ENCODE measurements at regions of chr14 and their contacts with region 1.

Region 1: DNA sequence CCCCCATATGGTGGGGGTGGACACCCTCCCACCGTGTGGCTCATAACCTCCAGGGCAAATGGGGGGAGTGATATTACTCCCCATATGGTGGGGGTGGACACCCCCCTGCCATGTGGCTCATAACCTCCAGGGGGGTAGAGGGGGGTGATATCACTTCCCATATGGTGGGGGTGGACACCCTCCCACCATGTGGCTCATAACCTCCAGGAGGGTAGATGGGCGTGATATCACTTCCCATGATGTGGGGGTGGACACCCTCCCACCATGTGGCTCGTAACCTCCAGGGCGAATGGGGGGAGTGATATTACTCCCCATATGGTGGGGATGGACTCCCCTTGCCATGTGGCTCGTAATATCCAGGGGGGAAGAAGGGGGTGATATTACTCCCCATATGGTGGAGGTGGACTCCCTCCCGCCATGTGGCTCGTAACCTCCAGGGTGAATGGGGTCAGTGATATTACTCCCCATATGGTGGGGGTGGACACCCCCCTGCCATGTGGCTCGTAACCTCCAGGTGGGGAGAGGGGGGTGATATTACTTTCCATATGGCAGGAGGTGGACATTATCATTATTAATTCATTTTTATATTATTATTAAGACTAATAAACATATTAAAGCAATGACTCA is 51.2 kb upstream of the OXA1L start:
- DNase-seq: no peak
- H3K4me3 Mint-ChIP-seq: no peak overlapping the region
- H3K27ac Mint-ChIP-seq: no peak overlapping the region
- H3K4me1 Mint-ChIP-seq: peaks cover 17% of the 10 kb centered on the region
- H3K27me3 Mint-ChIP-seq: peaks cover 24% of the 10 kb centered on the region

Region 2: GRCh38 chr14:22598099-22598899 is 117.0 kb before region 1 on chr14 and contains the start of gene ABHD4:
- intact Hi-C with region 1: loop called (anchors 5 kb)
- DNase-seq: peak; percentile 72
- H3K4me3 Mint-ChIP-seq: peak within 1 kb of the TSS; percentile 97
- H3K27ac Mint-ChIP-seq: peak within 1 kb of the TSS; percentile 84
- H3K4me1 Mint-ChIP-seq: peaks cover 39% of the 10 kb centered on the region
- H3K27me3 Mint-ChIP-seq: no peaks in the 10 kb centered on the region
- total RNA-seq, gene ABHD4: 13.2 and 13.6 TPM in 2 replicates

Region 3: DNA sequence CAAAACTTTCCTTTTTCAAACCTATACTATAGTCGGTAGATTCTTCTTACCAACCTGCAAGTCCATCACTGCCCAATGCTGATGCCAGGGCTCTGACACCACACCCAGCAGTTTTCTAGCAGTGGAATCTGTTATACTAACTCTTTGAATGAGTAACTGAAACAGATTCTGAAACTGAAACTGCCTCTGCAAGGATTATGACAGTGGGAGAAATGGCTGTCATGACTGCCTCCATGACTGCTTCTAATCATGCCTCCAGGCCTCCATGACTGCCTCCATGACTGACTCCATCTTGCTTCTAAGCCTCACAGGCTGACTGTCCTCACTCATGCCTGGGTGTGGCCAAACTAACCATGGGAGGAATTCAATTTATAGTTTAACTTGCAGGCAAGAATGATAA is 21.8 kb after region 1 on chr14:
- intact Hi-C with region 1: loop called (anchors 1 kb)
- DNase-seq: peak; percentile 43
- H3K4me3 Mint-ChIP-seq: peak overlapping the region; percentile 53
- H3K27ac Mint-ChIP-seq: peak overlapping the region; percentile 96
- H3K4me1 Mint-ChIP-seq: peaks cover 27% of the 10 kb centered on the region
- H3K27me3 Mint-ChIP-seq: peaks cover 6% of the 10 kb centered on the region

Region 4: DNA sequence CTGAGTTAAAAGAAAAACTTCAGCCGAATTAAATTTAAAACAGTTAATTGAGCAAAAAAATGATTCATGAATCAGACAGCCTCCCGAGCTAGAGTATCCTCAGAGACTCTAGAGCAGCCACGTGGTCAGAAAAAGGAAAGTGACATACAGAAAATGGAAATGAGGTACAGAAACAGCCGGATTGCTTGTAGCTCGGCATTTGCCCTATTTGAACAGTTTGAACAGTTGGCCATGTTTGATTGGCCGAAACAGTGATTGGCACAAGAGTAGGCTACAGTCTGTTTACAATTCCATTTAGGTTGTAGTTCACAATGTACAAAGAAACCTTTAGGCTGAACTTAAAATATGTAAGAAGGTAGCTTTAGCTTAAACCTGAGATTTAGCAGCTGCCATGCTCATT is 38.3 kb after region 1 on chr14:
- intact Hi-C with region 1: no loop called
- DNase-seq: no peak
- H3K4me3 Mint-ChIP-seq: no peak overlapping the region
- H3K27ac Mint-ChIP-seq: no peak overlapping the region
- H3K4me1 Mint-ChIP-seq: peaks cover 10% of the 10 kb centered on the region
- H3K27me3 Mint-ChIP-seq: peaks cover 6% of the 10 kb centered on the region

Region 5: DNA sequence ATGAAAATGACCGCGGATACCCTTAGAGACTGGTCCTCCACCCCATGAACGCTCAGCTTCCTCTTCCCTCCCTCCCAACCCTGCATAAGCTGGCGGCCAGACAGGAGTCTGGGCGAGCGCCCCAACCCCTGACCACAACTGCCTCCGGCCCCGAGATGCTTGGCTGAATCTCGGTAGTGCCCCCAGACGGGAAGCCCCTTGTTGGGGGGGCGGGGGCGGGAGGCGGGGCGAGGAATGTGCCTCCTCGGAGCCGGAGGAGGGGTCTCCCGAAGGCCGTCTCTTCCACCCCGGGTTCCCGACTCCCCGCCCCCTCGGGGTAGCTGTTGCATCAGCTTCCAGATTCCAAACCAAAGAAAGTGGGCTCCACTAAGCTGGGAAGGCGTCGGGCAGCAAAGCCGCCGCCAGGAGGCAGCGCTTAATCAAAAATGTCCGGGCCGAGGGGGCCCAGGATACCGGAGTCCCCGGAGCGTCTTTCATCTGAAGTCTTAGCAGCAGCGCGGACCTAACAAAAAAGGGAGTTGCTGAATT is 107.3 kb after region 1 on chr14:
- intact Hi-C with region 1: loop called (anchors 10 kb)
- DNase-seq: peak; percentile 52
- H3K4me3 Mint-ChIP-seq: peak overlapping the region; percentile 60
- H3K27ac Mint-ChIP-seq: no peak overlapping the region
- H3K4me1 Mint-ChIP-seq: peaks cover 35% of the 10 kb centered on the region
- H3K27me3 Mint-ChIP-seq: peaks cover 8% of the 10 kb centered on the region